H1 (cell line): ENCODE measurements at regions of chr3 and their contacts with region 1.

Region 1: DNA sequence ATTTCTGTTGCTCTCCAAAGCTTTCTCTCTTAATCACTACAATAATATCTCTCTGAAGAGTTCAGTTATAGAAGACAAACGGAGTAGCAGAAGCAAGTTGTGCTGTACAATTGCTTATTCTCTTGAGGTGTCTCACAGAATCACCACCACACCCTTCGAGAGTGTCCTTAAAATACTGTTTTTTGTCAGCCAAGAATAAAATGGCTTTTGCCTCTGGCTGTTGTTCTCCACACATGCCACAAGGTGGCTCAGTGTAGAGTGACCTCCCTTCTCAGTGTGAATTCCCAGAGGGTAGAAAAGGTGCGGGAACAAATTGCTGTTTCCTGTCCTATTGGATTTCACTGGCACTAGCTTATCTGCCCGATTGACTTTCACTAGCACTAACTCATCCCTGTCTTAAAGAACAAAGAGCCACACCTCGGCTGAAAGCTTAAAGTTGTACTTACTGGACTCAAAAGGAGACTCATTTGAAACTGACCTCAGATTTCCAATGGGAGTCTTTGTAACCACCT is 134.2 kb upstream of the SATB1 start:
- DNase-seq: peak; percentile 27 to 52
- H3K4me3 ChIP-seq: no peak overlapping the region
- H3K27ac ChIP-seq: no peak overlapping the region
- H3K4me1 ChIP-seq: peaks cover 0 to 5% (median 0%) of the 10 kb centered on the region in 4 experiments; a peak in 1 of 7 replicates
- H3K27me3 ChIP-seq: no peaks in the 10 kb centered on the region
- CTCF ChIP-seq: peak; percentile 30 to 78 (median 78)
- EP300 ChIP-seq: no peak
- POLR2A ChIP-seq: no peak
- RAD21 ChIP-seq: peak; percentile 80 to 84

Region 2: GRCh38 chr3:18572809-18573208 is 13.4 kb after region 1 on chr3:
- CTCF ChIA-PET with region 1: interaction called, 42 read pairs
- POLR2A ChIA-PET with region 1: no interaction called
- DNase-seq: no peak
- H3K4me3 ChIP-seq: no peak overlapping the region
- H3K27ac ChIP-seq: no peak overlapping the region
- H3K4me1 ChIP-seq: no peaks in the 10 kb centered on the region
- H3K27me3 ChIP-seq: no peaks in the 10 kb centered on the region
- CTCF ChIP-seq: no peak
- EP300 ChIP-seq: no peak
- POLR2A ChIP-seq: no peak
- RAD21 ChIP-seq: no peak

Region 3: DNA sequence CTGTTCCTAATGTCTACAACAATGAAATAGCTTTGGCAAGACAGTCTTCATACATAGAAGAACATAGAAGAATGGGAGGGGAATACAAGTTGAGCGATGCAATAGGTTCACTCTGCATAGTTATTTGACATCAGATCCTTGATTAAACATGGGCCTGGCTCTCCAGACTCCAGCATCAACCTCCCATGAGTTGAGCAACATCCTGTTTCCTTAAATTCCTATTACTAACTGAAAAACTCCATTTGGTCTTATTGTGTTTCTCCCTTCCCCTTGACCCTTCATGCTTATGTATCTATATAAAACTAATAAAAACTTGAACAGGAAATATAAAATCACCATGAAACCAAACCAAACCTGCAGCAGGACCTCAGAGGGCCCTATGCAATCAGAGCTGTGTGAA is 170.3 kb after region 1 on chr3:
- CTCF ChIA-PET with region 1: interaction called, 10 read pairs
- POLR2A ChIA-PET with region 1: no interaction called
- DNase-seq: no peak
- H3K4me3 ChIP-seq: no peak overlapping the region
- H3K27ac ChIP-seq: no peak overlapping the region
- H3K4me1 ChIP-seq: no peaks in the 10 kb centered on the region
- H3K27me3 ChIP-seq: no peaks in the 10 kb centered on the region
- CTCF ChIP-seq: no peak
- EP300 ChIP-seq: no peak
- POLR2A ChIP-seq: no peak
- RAD21 ChIP-seq: no peak

Region 4: DNA sequence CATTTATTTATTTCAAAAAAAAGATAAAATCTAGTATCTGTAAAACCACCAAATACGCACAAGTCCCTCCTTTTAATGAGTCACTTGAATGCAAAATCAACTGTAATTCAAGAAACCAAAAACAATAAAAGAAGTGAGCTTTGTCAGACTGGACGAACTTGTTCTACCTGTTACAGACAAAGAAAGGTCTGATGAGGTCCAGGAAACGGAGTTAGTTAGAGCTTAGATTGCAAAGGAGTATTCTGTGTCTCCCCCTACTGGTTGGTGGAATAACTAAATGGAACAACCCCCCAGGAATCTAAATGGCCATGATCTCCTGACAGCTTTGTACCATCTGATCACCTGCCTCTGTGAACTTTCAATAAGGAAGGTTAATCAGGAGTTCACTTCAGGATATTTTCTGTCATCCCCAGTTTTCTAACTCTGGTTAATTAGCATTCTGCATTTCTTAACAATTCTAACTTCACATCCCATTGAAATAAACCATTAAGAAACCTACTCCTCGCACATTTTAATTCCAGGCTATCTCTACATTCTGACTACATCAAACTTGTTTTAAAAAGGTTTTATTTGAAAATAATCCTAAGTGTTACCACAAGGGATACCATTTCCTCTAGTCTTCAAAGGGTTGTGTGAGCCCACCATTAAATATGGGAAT is 198.8 kb after region 1 on chr3:
- CTCF ChIA-PET with region 1: interaction called, 36 read pairs
- POLR2A ChIA-PET with region 1: no interaction called
- DNase-seq: peak in 1 of 2 experiments; percentile 21
- H3K4me3 ChIP-seq: peak overlapping the region in 1 of 4 experiments; percentile 23; a peak in 1 of 8 replicates
- H3K27ac ChIP-seq: no peak overlapping the region
- H3K4me1 ChIP-seq: no peaks in the 10 kb centered on the region; a peak in 1 of 7 replicates
- H3K27me3 ChIP-seq: no peaks in the 10 kb centered on the region
- CTCF ChIP-seq: peak in 2 of 3 experiments; percentile 75 to 83; a peak in 3 of 4 replicates
- EP300 ChIP-seq: peak in 1 of 2 experiments; percentile 75; a peak in 1 of 3 replicates
- POLR2A ChIP-seq: no peak
- RAD21 ChIP-seq: peak; percentile 87 to 93